Sigmoid colon (tissue), 7 donors: ENCODE measurements at regions of chr9 and their contacts with region 1.

Region 1: DNA sequence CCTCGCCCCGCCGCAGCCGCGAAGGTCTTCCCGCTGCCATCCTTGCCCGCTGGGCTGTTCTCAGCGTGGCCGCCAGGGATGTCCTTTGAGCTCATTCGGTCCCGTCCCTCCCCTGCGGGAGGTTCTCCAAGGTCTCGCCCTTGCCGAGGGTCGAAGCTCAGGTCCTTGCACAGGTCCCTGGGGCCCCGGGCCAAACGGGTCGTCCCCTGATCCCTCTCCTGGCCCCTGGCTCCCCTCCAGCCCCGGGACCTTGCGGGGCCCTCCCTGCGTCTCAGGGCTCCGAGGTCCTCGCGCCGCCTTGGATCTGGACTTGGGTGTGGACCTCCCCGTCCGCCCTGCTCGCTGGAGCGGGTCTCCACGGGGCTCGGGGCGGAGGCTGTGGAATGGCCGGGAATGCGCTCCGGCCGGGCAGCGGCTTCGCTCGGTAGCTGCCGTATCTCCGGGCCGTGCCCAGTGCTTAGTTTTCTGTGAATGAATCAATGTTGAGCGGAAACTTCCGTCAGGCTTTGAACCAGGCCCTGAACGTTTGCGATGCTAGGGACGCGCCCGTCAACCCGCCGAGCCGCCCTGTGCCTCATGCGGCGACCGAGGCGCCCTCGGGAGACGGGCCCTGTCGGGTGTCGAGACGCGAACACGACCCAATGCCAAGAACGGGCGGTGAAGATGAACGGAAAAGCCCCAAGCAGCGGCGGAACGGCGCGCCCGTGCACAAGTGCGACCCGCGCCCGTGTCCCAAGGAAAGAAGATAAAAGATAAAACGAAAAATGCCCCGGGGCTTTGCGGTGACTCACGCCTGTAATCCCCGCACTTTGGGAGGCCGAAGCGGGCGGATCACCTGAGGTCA is 789 bp downstream of the RNU6ATAC start:
- DNase-seq: peak; percentile 88
- H3K4me3 ChIP-seq: no peak overlapping the region
- H3K27ac ChIP-seq: no peak overlapping the region
- H3K4me1 ChIP-seq: peaks cover 0 to 31% (median 13%) of the 10 kb centered on the region in 4 donors
- H3K27me3 ChIP-seq: no peaks in the 10 kb centered on the region
- CTCF ChIP-seq: peak; percentile 59 to 82 (median 78)
- EP300 ChIP-seq: no peak
- POLR2A ChIP-seq: no peak

Region 2: DNA sequence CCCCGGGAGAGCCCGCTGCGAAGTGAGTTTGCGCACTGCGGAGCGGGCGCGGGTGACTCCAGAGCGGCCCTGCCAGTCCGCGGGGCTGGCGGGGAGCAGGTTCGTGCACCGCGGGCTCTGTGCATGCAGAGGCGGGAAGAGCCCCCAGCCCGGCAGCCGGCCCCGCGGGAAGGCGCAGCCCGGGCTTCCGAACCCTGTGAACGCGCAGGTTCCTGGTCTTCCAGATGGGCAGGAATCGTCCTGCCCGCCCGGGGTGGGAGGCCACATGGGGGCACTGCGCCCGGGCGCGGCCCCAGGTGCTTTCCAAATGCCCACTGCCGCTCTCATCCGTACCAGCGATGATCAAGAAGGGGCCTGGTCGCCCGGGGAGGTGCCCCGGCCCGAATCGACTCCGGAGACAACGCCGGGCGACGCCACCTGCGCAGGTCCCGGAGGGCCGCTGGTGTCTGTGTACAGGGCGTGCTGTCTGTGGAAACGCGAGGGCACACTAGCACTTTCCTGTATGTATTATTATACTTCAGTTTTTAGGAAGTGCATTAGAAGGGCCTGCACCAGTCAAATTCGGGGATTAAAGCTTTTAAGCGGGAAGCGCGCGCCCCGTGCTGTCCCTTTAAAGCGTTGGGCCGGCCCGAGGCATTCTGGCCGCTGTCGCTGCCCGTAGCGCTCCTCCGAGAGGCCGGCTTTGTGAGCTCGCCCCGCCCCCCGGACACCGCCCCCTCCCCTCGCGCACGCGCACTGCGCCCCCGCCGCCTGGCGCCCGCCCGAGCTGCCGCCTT is 28.0 kb before region 1 on chr9 and contains the start of gene WDR5:
- intact Hi-C with region 1: loop called (anchors 1 kb)
- DNase-seq: peak; percentile 96
- H3K4me3 ChIP-seq: peak within 1 kb of the TSS; percentile 63 to 96 (median 84)
- H3K27ac ChIP-seq: peak within 1 kb of the TSS; percentile 87 to 95 (median 90)
- H3K4me1 ChIP-seq: peaks cover 0 to 56% (median 52%) of the 10 kb centered on the region in 4 donors
- H3K27me3 ChIP-seq: no peaks in the 10 kb centered on the region
- CTCF ChIP-seq: no peak
- EP300 ChIP-seq: no peak
- POLR2A ChIP-seq: peak; percentile 16
- total RNA-seq, gene WDR5: 13.6 to 18.3 (median 15.0) TPM

Region 3: DNA sequence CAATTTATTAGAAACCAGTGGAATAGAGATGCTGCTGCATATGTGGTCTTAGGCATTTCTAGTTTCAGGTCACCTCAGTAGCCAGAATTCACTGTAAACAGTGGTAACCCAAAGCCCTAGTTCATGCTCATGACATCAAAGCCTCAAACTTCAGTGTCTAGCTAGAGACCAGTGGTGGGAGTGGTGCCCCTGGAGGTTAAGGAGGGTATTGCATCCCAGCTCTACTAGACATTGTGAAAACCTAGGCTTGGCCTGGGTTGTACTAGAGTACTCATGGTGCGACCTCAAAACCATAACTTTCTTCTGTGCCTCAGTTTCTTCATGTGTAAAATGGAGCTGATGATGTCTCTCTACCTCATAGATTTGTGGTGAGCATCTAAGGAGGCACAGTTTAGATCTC is 496.8 kb after region 1 on chr9:
- intact Hi-C with region 1: loop called (anchors 5 kb)
- DNase-seq: peak; percentile 53
- H3K4me3 ChIP-seq: no peak overlapping the region
- H3K27ac ChIP-seq: peak overlapping the region; percentile 79 to 92 (median 90)
- H3K4me1 ChIP-seq: peaks cover 0 to 93% (median 88%) of the 10 kb centered on the region in 4 donors
- H3K27me3 ChIP-seq: no peaks in the 10 kb centered on the region
- CTCF ChIP-seq: peak in 3 of 4 experiments; percentile 26 to 61 (median 42)
- EP300 ChIP-seq: no peak
- POLR2A ChIP-seq: no peak